ENCODE measurements at regions of chr9 and their contacts with region 1.

Region 1: GRCh38 chr9:68577774-68578591 is 37.3 kb upstream of the TMEM252 start:
- H3K4me3 ChIP-seq: no peak overlapping the region
- H3K27ac ChIP-seq: no peak overlapping the region
- H3K4me1 ChIP-seq: no peaks in the 10 kb centered on the region
- CTCF ChIP-seq: no peak

Region 2: DNA sequence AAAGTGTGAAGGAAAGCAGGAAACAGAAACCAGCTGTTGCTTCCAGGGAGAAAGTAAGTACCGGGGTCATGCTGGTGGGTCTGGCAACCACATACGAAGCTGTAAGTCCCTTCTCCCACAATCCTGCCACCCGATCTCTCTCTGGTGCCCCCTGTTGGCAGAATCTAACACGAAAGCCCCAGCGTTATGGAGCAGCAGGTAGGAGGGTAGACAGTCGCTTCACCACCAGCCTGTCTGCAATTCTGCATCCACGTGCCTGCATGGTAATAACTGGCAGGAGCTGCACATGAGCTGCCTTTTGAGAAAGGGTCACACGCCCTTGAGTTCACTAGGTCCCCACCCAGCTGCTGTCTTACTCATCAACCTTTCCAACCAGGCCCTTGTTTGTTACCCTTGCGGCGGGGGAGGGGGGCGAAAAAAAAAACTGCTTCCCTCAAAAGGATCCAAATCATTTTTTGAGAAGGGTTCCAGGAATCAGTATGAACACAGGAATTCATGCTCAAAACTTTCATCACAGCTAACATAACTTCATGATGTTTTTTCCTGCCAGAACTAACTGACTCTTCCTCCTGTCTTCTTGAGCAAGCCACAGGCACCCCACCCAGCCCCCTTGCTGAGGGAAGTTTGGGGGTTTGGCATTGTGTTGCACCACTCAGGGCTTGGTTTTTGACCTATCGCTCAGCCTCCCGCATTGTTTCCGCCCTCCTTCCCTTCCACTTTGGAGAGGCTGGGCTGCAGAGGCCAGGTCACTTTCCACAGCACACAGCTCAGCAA is 17.7 kb before region 1 on chr9:
- CTCF ChIA-PET with region 1: interaction called, 10 read pairs
- POLR2A ChIA-PET with region 1: no interaction called
- H3K4me3 ChIP-seq: no peak overlapping the region
- H3K27ac ChIP-seq: no peak overlapping the region
- H3K4me1 ChIP-seq: no peaks in the 10 kb centered on the region
- CTCF ChIP-seq: no peak

Measured in HEK293 (cell line).